ENCODE measurements at regions of chr6 and their contacts with region 1.

Region 1: DNA sequence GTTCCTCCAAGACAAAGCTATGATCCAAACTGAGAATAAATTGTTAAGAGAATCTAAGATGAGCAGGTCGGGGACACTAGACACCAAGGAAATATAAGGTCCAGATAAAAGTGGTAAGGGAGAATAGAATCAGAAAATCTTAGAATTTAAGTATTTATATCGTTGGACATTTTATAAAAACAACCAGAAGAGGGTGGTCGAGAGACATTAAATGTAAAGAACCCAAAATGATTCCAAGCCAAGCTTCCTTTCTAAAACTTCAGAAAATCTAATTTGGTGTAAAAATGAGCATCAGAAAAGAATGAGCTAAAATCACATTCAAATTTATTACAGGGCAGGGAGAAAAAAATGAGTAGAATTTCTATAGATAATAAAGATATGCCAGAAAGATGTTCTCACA is 97.8 kb upstream of the OGFRL1 start:
- DNase-seq: no peak
- H3K4me3 ChIP-seq: no peak overlapping the region
- H3K27ac ChIP-seq: no peak overlapping the region
- H3K4me1 ChIP-seq: no peaks in the 10 kb centered on the region
- H3K27me3 ChIP-seq: no peaks in the 10 kb centered on the region
- CTCF ChIP-seq: peak in 1 of 3 experiments; percentile 29
- POLR2A ChIP-seq: no peak

Region 2: GRCh38 chr6:71349976-71350615 is 159.3 kb after region 1 on chr6:
- intact Hi-C with region 1: loop called (anchors 5 kb)
- DNase-seq: no peak
- H3K4me3 ChIP-seq: no peak overlapping the region
- H3K27ac ChIP-seq: peak overlapping the region; percentile 14
- H3K4me1 ChIP-seq: peaks cover 22% of the 10 kb centered on the region
- H3K27me3 ChIP-seq: no peaks in the 10 kb centered on the region
- CTCF ChIP-seq: no peak
- POLR2A ChIP-seq: no peak

Region 3: DNA sequence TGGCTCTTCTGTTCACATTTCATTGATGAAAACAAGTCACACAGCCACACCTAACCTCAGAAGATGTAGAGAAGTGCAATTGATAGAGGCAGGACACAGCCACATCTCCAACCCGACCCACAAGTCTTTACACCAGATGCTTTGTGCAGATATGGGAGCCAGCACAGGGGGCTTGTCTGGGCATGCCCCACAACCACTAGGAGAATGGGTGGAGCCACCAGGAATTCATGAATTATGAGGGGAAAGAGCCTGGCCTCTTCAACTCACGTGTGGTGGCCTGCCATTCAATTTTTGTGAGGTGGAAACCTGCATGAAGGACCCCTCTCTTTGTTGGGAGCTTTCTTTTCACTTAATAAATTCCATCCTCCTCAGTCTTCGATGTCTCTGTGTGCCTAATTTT is 176.9 kb after region 1 on chr6:
- intact Hi-C with region 1: no loop called
- DNase-seq: no peak
- H3K4me3 ChIP-seq: no peak overlapping the region
- H3K27ac ChIP-seq: no peak overlapping the region
- H3K4me1 ChIP-seq: peaks cover 11% of the 10 kb centered on the region
- H3K27me3 ChIP-seq: no peaks in the 10 kb centered on the region
- CTCF ChIP-seq: no peak
- POLR2A ChIP-seq: no peak

Measured in vagina (tissue), 2 donors.